ENCODE measurements at regions of chr13 and their contacts with region 1.

Region 1: GRCh38 chr13:72571191-72571590 is 156.2 kb downstream of the MZT1 start:
- DNase-seq: no peak
- H3K4me3 ChIP-seq: no peak overlapping the region
- H3K27ac ChIP-seq: no peak overlapping the region
- H3K4me1 ChIP-seq: no peaks in the 10 kb centered on the region
- H3K27me3 ChIP-seq: no peaks in the 10 kb centered on the region
- CTCF ChIP-seq: no peak
- EP300 ChIP-seq: no peak
- POLR2A ChIP-seq: no peak

Region 2: GRCh38 chr13:71935166-71935840 is 635.9 kb before region 1 on chr13:
- in situ Hi-C with region 1: no loop called
- intact Hi-C with region 1: no loop called
- DNase-seq: no peak
- H3K4me3 ChIP-seq: no peak overlapping the region
- H3K27ac ChIP-seq: no peak overlapping the region
- H3K4me1 ChIP-seq: no peaks in the 10 kb centered on the region
- H3K27me3 ChIP-seq: no peaks in the 10 kb centered on the region
- CTCF ChIP-seq: no peak
- EP300 ChIP-seq: no peak
- POLR2A ChIP-seq: no peak

Region 3: DNA sequence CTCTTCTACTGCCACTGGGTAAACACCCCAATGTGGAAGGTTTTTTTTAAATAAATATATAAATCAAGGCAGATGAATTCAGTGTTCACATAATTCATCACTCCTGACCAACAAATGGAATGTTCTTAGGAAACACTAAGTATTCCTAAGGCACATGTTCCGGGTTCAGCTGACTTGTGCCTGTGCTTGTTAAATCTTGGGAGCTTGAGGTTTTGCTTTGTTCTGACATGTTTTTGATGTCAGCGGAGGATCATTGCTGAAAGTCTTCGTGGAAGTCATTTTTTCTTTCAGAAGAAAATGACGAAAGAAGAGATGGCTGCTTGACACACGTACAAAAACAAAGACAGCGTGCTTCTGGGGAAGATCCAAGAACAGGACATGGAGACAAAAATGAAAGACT is 29.5 kb before region 1 on chr13:
- in situ Hi-C with region 1: no loop called
- intact Hi-C with region 1: loop called (anchors 2 kb)
- DNase-seq: no peak
- H3K4me3 ChIP-seq: no peak overlapping the region
- H3K27ac ChIP-seq: no peak overlapping the region
- H3K4me1 ChIP-seq: peaks cover 0 to 34% (median 11%) of the 10 kb centered on the region in 4 donors
- H3K27me3 ChIP-seq: no peaks in the 10 kb centered on the region
- CTCF ChIP-seq: no peak
- EP300 ChIP-seq: no peak
- POLR2A ChIP-seq: no peak

Region 4: DNA sequence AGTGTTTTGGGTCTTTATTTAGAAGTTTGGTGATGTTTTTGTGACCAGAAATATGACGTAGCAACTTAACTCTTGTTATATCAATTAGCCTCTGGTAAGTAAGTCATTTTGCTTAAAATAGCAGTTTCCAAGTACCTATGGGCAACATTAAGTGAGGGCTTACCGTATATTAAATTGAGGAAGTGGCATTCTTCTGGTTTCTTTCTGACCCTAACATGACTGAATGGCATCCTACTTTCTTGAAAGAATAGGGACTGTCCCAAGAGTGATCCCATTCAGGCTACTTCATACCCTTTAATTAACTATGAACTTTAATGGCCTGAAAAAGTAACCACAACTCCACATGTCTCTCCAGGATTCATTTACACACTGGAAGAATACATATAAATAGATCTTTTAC is 49.7 kb after region 1 on chr13:
- in situ Hi-C with region 1: no loop called
- intact Hi-C with region 1: no loop called
- DNase-seq: no peak
- H3K4me3 ChIP-seq: no peak overlapping the region
- H3K27ac ChIP-seq: no peak overlapping the region
- H3K4me1 ChIP-seq: no peaks in the 10 kb centered on the region
- H3K27me3 ChIP-seq: no peaks in the 10 kb centered on the region
- CTCF ChIP-seq: no peak
- EP300 ChIP-seq: no peak
- POLR2A ChIP-seq: no peak

Measured in transverse colon (tissue), 4 donors.